K562 (cell line): ENCODE measurements at regions of chr4 and their contacts with region 1.

Region 1: DNA sequence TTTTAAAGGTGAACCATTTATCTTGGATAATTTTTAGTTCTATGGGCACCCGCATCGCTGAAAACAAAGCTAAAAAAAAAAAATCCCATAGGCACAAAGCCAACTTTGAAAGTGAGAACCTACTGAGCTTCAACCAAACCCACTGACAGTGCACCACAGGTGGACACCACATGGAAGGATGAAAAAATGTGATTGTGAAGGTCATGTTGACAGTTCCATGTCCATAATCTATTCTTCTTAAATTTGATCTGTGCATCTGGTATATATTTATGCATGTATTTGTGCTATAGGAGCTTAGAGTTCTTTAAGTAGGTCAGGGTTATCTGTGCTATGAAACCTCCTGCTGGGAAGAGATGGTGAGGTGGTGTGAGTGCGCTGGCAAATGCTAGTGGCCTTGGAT is 374.3 kb downstream of the SPRY1 start:
- DNase-seq: no peak
- ATAC-seq: no peak
- H3K4me3 ChIP-seq: no peak overlapping the region
- H3K27ac ChIP-seq: no peak overlapping the region
- H3K4me1 ChIP-seq: no peaks in the 10 kb centered on the region
- H3K27me3 ChIP-seq: no peaks in the 10 kb centered on the region; a peak in 1 of 5 replicates
- CTCF ChIP-seq: no peak
- EP300 ChIP-seq: no peak
- POLR2A ChIP-seq: no peak
- RAD21 ChIP-seq: no peak

Region 2: GRCh38 chr4:124322234-124323065 is 551.6 kb after region 1 on chr4:
- CTCF ChIA-PET with region 1: no interaction called
- POLR2A ChIA-PET with region 1: no interaction called
- in situ Hi-C with region 1: no loop called
- intact Hi-C with region 1: loop called (anchors 5 kb)
- DNase-seq: peak; percentile 9 to 21 (median 17)
- ATAC-seq: peak; percentile 28; the same call in 1 of the 3 replicates
- H3K4me3 ChIP-seq: no peak overlapping the region
- H3K27ac ChIP-seq: no peak overlapping the region
- H3K4me1 ChIP-seq: no peaks in the 10 kb centered on the region
- H3K27me3 ChIP-seq: no peaks in the 10 kb centered on the region
- CTCF ChIP-seq: peak in 2 of 3 experiments; percentile 21 to 55; a peak in 4 of 6 replicates
- EP300 ChIP-seq: no peak
- POLR2A ChIP-seq: no peak
- RAD21 ChIP-seq: peak; percentile 46 to 57

Region 3: DNA sequence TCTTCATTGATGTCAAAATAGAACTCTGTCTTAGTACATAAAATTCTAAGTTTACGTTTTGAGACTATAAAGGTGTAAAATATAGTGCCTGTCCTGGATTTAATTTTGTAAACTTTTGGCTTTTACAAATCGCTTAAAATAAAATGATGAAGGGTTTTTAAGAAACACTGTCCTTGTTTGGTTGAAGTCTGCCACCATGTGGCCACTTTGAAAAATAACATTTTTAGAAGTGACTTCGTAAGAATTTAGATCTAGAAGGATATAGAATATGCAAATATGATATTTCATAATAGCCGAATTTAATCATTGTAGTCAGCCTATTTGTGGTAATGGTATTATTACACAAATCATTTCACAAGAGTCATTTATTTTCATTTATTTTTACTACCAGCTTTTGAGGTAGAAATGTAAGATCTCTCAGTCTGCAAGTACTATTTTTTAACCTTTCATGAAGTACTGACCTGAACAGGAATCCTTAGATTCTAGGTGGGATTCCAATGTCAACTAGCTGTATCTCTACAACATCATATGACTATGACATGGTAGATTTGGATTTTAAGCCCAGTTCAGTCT is 1512.9 kb after region 1 on chr4:
- CTCF ChIA-PET with region 1: no interaction called
- POLR2A ChIA-PET with region 1: no interaction called
- in situ Hi-C with region 1: no loop called
- intact Hi-C with region 1: loop called (anchors 5 kb)
- DNase-seq: peak; percentile 5 to 30 (median 12)
- ATAC-seq: no peak
- H3K4me3 ChIP-seq: no peak overlapping the region
- H3K27ac ChIP-seq: no peak overlapping the region
- H3K4me1 ChIP-seq: no peaks in the 10 kb centered on the region
- H3K27me3 ChIP-seq: no peaks in the 10 kb centered on the region
- CTCF ChIP-seq: peak in 1 of 3 experiments; percentile 66; a peak in 3 of 6 replicates
- EP300 ChIP-seq: no peak
- POLR2A ChIP-seq: no peak
- RAD21 ChIP-seq: peak; percentile 72